ENCODE measurements at regions of chr12 and their contacts with region 1.

Region 1: GRCh38 chr12:53321074-53321814 is at the start of gene AAAS:
- DNase-seq: peak; percentile 94 to 97 (median 95)
- H3K4me3 ChIP-seq: peak within 1 kb of the TSS; percentile 99
- H3K4me3 Mint-ChIP-seq: peak within 1 kb of the TSS; percentile 95 to 100 (median 98)
- H3K27ac ChIP-seq: peak within 1 kb of the TSS; percentile 81
- H3K27ac Mint-ChIP-seq: peak within 1 kb of the TSS; percentile 95 to 99 (median 96)
- H3K4me1 ChIP-seq: peaks cover 31% of the 10 kb centered on the region
- H3K4me1 Mint-ChIP-seq: peaks cover 40 to 50% (median 40%) of the 10 kb centered on the region in 3 donors
- H3K27me3 ChIP-seq: no peaks in the 10 kb centered on the region
- H3K27me3 Mint-ChIP-seq: peaks cover 0 to 2% of the 10 kb centered on the region in 2 donors
- total RNA-seq, gene AAAS: 77.9 to 79.7 TPM

Region 2: GRCh38 chr12:52913076-52913821 is 408.0 kb before region 1 on chr12:
- CTCF ChIA-PET with region 1: no interaction called
- POLR2A ChIA-PET with region 1: no interaction called
- DNase-seq: no peak
- H3K4me3 ChIP-seq: no peak overlapping the region
- H3K4me3 Mint-ChIP-seq: no peak overlapping the region
- H3K27ac ChIP-seq: no peak overlapping the region
- H3K27ac Mint-ChIP-seq: peak overlapping the region in 1 of 8 donors; percentile 92
- H3K4me1 ChIP-seq: no peaks in the 10 kb centered on the region
- H3K4me1 Mint-ChIP-seq: no peaks in the 10 kb centered on the region
- H3K27me3 ChIP-seq: no peaks in the 10 kb centered on the region
- H3K27me3 Mint-ChIP-seq: peaks cover 3 to 10% of the 10 kb centered on the region in 2 donors

Region 3: DNA sequence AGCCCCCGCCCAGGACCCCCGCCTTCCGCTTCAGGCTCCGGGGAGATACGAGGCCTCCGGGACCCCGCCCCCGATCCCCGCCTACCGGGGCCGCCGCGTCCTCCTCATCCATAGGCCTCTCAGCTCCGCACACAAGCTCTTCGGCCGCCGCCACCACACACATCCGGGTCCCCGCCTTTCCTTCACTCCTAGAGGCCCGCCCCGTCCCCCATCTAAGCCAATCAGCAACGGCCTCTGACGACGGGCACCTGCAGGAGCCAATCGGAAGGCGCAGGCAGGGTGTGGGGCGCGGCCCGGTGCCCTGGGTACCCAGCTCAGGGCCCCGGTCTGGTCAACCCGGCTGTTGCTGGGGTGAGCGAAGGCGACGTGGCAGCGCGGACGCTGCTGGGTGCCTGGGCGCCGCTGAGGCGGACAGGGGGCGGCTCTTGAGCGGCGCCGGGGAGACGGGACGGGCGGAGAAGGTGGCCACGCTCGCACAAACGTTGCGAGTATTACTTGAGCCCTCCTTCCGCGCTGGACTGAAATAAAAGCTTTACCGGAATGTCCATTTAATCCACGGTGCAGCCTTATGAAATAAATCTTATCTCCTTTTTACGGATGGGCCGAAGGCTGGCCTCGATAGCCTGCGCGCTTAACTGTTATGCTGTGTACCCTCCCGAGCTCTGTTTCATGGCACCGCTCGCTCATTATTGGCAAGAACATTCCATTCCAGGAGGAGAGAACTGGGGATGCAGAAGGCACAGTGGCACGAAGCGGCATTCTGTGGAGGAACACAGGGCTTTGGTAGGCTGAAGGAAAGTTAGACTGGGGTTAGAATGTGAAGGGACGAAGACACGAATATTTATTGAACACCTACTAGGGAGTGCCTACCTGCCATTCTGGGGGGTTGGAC is 241.8 kb before region 1 on chr12 and contains the start of gene SPRYD3:
- CTCF ChIA-PET with region 1: interaction called, 10 read pairs
- POLR2A ChIA-PET with region 1: interaction called, 4 read pairs
- DNase-seq: peak; percentile 95 to 98 (median 96)
- H3K4me3 ChIP-seq: peak within 1 kb of the TSS; percentile 87
- H3K4me3 Mint-ChIP-seq: peak within 1 kb of the TSS; percentile 85 to 95 (median 91)
- H3K27ac ChIP-seq: peak within 1 kb of the TSS; percentile 84
- H3K27ac Mint-ChIP-seq: peak within 1 kb of the TSS; percentile 83 to 98 (median 93)
- H3K4me1 ChIP-seq: peaks cover 21% of the 10 kb centered on the region
- H3K4me1 Mint-ChIP-seq: peaks cover 38 to 61% (median 50%) of the 10 kb centered on the region in 3 donors
- H3K27me3 ChIP-seq: no peaks in the 10 kb centered on the region
- H3K27me3 Mint-ChIP-seq: peaks cover 0 to 1% of the 10 kb centered on the region in 2 donors
- total RNA-seq, gene SPRYD3: 40.1 to 43.3 TPM

Region 4: GRCh38 chr12:53213348-53213747 is 107.9 kb before region 1 on chr12:
- CTCF ChIA-PET with region 1: interaction called, 91 read pairs
- POLR2A ChIA-PET with region 1: interaction called, 3 read pairs
- DNase-seq: peak; percentile 75 to 87 (median 80)
- H3K4me3 ChIP-seq: no peak overlapping the region
- H3K4me3 Mint-ChIP-seq: peak overlapping the region in 2 of 7 donors; percentile 12 to 40
- H3K27ac ChIP-seq: no peak overlapping the region
- H3K27ac Mint-ChIP-seq: peak overlapping the region; percentile 22 to 96 (median 90)
- H3K4me1 ChIP-seq: peaks cover 60% of the 10 kb centered on the region
- H3K4me1 Mint-ChIP-seq: peaks cover 62 to 81% (median 64%) of the 10 kb centered on the region in 3 donors
- H3K27me3 ChIP-seq: no peaks in the 10 kb centered on the region
- H3K27me3 Mint-ChIP-seq: no peaks in the 10 kb centered on the region

Region 5: DNA sequence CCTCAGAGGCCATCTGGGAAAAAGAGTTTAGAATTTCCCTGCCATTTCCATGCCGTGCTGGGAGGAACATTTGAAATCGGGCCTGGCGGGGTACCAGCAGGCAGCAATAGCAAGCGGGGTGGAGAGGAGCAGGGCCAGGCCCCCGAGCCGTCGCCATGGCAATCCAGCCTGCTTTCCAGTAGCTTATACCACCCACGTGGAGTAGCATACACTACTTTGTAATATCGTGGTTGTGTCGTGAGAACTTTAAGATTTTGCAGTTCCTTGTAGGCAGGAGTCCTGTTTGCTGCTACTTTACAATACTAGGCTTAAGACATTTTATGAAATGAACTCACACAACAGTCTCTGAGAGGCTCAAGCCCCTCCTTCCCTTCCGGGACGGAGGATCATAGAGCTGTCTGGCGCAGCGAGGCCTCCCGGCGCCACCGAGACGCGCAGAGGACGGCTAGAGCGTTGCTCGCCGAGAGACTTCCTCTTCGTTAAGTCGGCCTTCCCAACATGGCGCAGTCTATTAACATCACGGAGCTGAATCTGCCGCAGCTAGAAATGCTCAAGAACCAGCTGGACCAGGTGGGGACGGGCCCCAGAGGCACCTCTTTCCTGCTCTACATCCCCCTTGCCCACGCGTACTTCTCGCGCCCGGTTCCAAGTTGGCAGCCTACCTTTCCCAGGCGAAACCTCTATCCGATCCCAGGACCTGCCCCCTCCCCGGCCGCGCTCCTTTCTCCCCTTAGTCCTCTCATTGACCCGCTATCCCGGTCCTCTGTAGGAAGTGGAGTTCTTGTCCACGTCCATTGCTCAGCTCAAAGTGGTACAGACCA is 26.0 kb before region 1 on chr12 and contains the start of gene PFDN5:
- CTCF ChIA-PET with region 1: interaction called, 115 read pairs
- POLR2A ChIA-PET with region 1: interaction called, 13 read pairs
- DNase-seq: peak; percentile 72 to 93 (median 87)
- H3K4me3 ChIP-seq: peak within 1 kb of the TSS; percentile 90
- H3K4me3 Mint-ChIP-seq: peak within 1 kb of the TSS; percentile 97 to 100 (median 100)
- H3K27ac ChIP-seq: peak within 1 kb of the TSS; percentile 87
- H3K27ac Mint-ChIP-seq: peak within 1 kb of the TSS; percentile 93 to 100 (median 99)
- H3K4me1 ChIP-seq: peaks cover 41% of the 10 kb centered on the region
- H3K4me1 Mint-ChIP-seq: peaks cover 43 to 53% (median 47%) of the 10 kb centered on the region in 3 donors
- H3K27me3 ChIP-seq: no peaks in the 10 kb centered on the region
- H3K27me3 Mint-ChIP-seq: no peaks in the 10 kb centered on the region
- total RNA-seq, gene PFDN5: 380 to 385 TPM

Region 6: DNA sequence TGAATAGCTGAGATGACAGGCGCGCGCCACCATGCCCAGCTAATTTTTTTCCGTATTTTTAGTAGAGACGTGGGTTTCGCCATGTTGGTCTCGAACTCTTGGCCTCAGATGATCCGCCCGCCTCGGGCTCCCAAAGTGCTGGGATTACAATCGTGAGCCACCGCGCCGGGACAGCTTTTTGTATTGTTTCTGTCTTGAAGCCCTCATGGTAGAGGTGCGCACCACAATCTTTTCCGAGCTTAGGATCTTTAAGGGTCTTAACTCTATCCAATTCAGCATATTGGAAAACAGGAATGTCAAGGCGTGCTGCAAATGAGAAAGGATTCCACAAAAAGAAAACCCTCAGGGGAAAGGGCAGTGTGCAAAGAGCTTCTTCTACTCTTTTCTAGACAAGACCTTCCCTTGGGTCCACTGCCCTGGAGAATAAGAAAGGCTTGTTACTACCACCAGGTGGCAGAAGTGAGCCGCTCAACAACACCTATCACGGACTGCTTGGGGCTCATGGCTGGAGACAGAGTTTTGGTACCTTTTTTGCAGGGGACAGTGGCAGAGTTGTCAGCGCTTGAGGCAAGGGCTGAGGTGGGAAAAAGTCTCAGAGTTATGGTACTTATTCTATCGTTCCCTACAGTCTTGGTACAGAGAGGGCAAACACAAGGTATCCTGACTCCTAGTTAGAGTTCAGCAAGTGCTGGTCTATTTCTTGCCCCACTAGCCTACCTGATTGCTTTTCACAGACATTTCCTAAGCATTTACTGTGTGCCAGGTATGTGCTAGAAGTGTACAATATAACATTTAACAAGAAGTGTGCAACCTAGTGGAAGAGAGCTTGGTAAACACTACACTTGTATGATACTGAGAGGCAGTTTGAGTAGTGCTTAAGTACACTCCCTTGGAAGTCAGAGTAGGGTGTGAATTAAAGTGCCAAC is 31.4 kb after region 1 on chr12:
- CTCF ChIA-PET with region 1: interaction called, 209 read pairs
- POLR2A ChIA-PET with region 1: interaction called, 4 read pairs
- DNase-seq: peak; percentile 71 to 89 (median 78)
- H3K4me3 ChIP-seq: no peak overlapping the region
- H3K4me3 Mint-ChIP-seq: no peak overlapping the region
- H3K27ac ChIP-seq: no peak overlapping the region
- H3K27ac Mint-ChIP-seq: peak overlapping the region in 3 of 8 donors; percentile 2 to 38 (median 12)
- H3K4me1 ChIP-seq: peaks cover 6% of the 10 kb centered on the region
- H3K4me1 Mint-ChIP-seq: peaks cover 6 to 7% (median 6%) of the 10 kb centered on the region in 3 donors
- H3K27me3 ChIP-seq: no peaks in the 10 kb centered on the region
- H3K27me3 Mint-ChIP-seq: no peaks in the 10 kb centered on the region

Region 7: DNA sequence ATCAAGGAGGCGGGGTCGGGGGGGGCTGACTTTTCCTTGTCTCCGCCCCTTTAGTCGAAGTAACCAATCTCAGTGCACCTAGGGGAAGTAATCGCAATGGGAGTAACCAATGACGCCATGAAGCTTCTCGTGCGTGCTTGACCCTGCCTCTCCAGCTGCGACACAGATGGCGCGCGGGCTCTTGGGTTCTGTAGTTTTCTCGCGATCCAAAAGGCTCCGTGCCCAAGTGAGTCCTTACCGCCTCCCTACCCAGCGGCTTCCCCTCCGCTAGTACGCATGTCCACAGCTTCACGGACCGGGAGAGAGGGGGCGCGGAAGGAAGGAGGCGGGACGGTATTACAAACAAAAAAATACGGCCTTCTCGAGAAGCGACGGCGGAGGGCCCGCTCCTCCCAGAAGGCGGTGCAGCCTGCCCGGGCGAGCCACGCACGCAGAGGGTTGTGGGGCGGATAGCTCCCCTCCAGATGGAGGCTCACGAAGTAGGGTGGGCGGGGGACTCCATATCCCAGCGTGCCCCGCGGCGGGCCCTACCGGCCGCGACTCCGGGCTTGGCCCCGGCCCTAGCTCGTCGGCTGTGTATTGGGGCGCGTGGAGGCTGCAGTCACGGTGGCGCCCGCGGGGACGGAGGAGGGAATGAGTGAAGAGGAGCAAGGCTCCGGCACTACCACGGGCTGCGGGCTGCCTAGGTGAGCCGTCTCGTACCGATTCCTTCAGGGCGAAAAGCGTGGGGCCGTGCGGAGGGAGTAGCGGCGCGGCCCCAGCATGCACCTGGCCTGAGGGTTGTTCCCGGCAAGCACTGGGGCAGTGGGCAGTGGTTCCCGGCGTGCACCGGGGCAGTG is 179.8 kb after region 1 on chr12 and contains the start of gene TARBP2:
- CTCF ChIA-PET with region 1: interaction called, 10 read pairs
- POLR2A ChIA-PET with region 1: interaction called, 5 read pairs
- DNase-seq: peak; percentile 95 to 99 (median 98)
- H3K4me3 ChIP-seq: peak within 1 kb of the TSS; percentile 66
- H3K4me3 Mint-ChIP-seq: peak within 1 kb of the TSS; percentile 78 to 96 (median 91)
- H3K27ac ChIP-seq: peak within 1 kb of the TSS; percentile 94
- H3K27ac Mint-ChIP-seq: peak within 1 kb of the TSS; percentile 91 to 100 (median 96)
- H3K4me1 ChIP-seq: peaks cover 31% of the 10 kb centered on the region
- H3K4me1 Mint-ChIP-seq: peaks cover 28 to 56% (median 43%) of the 10 kb centered on the region in 3 donors
- H3K27me3 ChIP-seq: no peaks in the 10 kb centered on the region
- H3K27me3 Mint-ChIP-seq: no peaks in the 10 kb centered on the region
- total RNA-seq, gene TARBP2: 62.1 to 65.1 TPM

Measured in CD8-positive, alpha-beta memory T cell (primary cell).